Calu3 (cell line): ENCODE measurements at regions of chr3 and their contacts with region 1.

Region 1: GRCh38 chr3:169497567-169498257 is 165.8 kb downstream of the MECOM start:
- DNase-seq: peak; percentile 53
- H3K4me3 Mint-ChIP-seq: peak overlapping the region; percentile 22
- H3K27ac Mint-ChIP-seq: peak overlapping the region; percentile 82
- H3K4me1 Mint-ChIP-seq: peaks cover 65% of the 10 kb centered on the region
- H3K27me3 Mint-ChIP-seq: no peaks in the 10 kb centered on the region
- CTCF ChIP-seq: no peak

Region 2: GRCh38 chr3:168878655-168879054 is 619.1 kb before region 1 on chr3:
- CTCF ChIA-PET with region 1: no interaction called
- intact Hi-C with region 1: loop called (anchors 10 kb)
- DNase-seq: no peak
- H3K4me3 Mint-ChIP-seq: no peak overlapping the region
- H3K27ac Mint-ChIP-seq: no peak overlapping the region
- H3K4me1 Mint-ChIP-seq: peaks cover 71% of the 10 kb centered on the region
- H3K27me3 Mint-ChIP-seq: no peaks in the 10 kb centered on the region
- CTCF ChIP-seq: no peak

Region 3: GRCh38 chr3:169203631-169204550 is 293.8 kb before region 1 on chr3:
- CTCF ChIA-PET with region 1: interaction called, 3 read pairs
- intact Hi-C with region 1: loop called (anchors 10 kb)
- DNase-seq: no peak
- H3K4me3 Mint-ChIP-seq: no peak overlapping the region
- H3K27ac Mint-ChIP-seq: no peak overlapping the region
- H3K4me1 Mint-ChIP-seq: peaks cover 13% of the 10 kb centered on the region
- H3K27me3 Mint-ChIP-seq: no peaks in the 10 kb centered on the region
- CTCF ChIP-seq: no peak

Region 4: GRCh38 chr3:169218314-169218983 is 279.3 kb before region 1 on chr3:
- CTCF ChIA-PET with region 1: no interaction called
- intact Hi-C with region 1: no loop called
- DNase-seq: peak; percentile 80
- H3K4me3 Mint-ChIP-seq: no peak overlapping the region
- H3K27ac Mint-ChIP-seq: no peak overlapping the region
- H3K4me1 Mint-ChIP-seq: peaks cover 13% of the 10 kb centered on the region
- H3K27me3 Mint-ChIP-seq: no peaks in the 10 kb centered on the region
- CTCF ChIP-seq: peak; percentile 88

Region 5: GRCh38 chr3:169295126-169295525 is 202.6 kb before region 1 on chr3:
- CTCF ChIA-PET with region 1: interaction called, 3 read pairs
- intact Hi-C with region 1: loop called (anchors 5 kb)
- DNase-seq: peak; percentile 51
- H3K4me3 Mint-ChIP-seq: no peak overlapping the region
- H3K27ac Mint-ChIP-seq: peak overlapping the region; percentile 84
- H3K4me1 Mint-ChIP-seq: peaks cover 72% of the 10 kb centered on the region
- H3K27me3 Mint-ChIP-seq: no peaks in the 10 kb centered on the region
- CTCF ChIP-seq: peak; percentile 72

Region 6: DNA sequence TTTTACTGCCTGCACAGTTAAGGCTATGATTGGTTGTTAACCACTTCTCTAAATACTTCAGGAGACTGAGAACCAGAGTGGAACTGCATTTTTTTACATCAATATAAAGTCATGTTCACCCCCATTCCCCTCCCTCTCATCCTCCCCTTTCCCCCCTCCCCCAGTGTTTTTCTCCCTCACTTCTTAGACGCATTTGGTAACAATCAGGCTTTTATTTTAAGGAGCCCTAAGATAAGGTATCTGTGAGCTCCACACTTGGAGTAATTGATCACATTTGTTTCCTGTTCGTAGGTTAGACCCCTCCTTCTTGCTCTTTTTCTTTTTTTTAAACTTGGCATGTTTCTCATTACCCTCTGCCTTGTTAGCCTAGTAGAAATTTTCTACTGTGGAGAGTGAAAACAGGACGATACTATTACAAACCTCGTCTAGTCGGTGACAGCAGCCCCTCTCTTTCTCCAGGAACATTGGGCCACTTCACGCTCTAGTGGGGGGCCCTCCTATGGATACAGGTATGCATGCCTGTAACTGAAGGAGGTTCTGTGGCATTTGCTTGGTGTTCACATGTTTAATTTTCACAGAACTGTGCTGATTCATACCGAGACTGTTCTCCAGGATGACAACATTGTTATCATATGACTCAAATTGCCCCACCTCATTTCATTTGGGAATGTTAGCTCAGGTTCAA is 148.6 kb before region 1 on chr3:
- CTCF ChIA-PET with region 1: interaction called, 3 read pairs
- intact Hi-C with region 1: loop called (anchors 5 kb)
- DNase-seq: peak; percentile 60
- H3K4me3 Mint-ChIP-seq: peak overlapping the region; percentile 65
- H3K27ac Mint-ChIP-seq: peak overlapping the region; percentile 96
- H3K4me1 Mint-ChIP-seq: peaks cover 74% of the 10 kb centered on the region
- H3K27me3 Mint-ChIP-seq: no peaks in the 10 kb centered on the region
- CTCF ChIP-seq: no peak

Region 7: GRCh38 chr3:169430707-169431404 is 66.9 kb before region 1 on chr3:
- CTCF ChIA-PET with region 1: interaction called, 3 read pairs
- intact Hi-C with region 1: loop called (anchors 5 kb)
- DNase-seq: peak; percentile 72
- H3K4me3 Mint-ChIP-seq: peak overlapping the region; percentile 2
- H3K27ac Mint-ChIP-seq: peak overlapping the region; percentile 73
- H3K4me1 Mint-ChIP-seq: peaks cover 44% of the 10 kb centered on the region
- H3K27me3 Mint-ChIP-seq: no peaks in the 10 kb centered on the region
- CTCF ChIP-seq: no peak

Region 8: GRCh38 chr3:169515132-169515531 is 17.4 kb after region 1 on chr3:
- CTCF ChIA-PET with region 1: no interaction called
- intact Hi-C with region 1: no loop called
- DNase-seq: no peak
- H3K4me3 Mint-ChIP-seq: no peak overlapping the region
- H3K27ac Mint-ChIP-seq: no peak overlapping the region
- H3K4me1 Mint-ChIP-seq: no peaks in the 10 kb centered on the region
- H3K27me3 Mint-ChIP-seq: no peaks in the 10 kb centered on the region
- CTCF ChIP-seq: no peak

Region 9: DNA sequence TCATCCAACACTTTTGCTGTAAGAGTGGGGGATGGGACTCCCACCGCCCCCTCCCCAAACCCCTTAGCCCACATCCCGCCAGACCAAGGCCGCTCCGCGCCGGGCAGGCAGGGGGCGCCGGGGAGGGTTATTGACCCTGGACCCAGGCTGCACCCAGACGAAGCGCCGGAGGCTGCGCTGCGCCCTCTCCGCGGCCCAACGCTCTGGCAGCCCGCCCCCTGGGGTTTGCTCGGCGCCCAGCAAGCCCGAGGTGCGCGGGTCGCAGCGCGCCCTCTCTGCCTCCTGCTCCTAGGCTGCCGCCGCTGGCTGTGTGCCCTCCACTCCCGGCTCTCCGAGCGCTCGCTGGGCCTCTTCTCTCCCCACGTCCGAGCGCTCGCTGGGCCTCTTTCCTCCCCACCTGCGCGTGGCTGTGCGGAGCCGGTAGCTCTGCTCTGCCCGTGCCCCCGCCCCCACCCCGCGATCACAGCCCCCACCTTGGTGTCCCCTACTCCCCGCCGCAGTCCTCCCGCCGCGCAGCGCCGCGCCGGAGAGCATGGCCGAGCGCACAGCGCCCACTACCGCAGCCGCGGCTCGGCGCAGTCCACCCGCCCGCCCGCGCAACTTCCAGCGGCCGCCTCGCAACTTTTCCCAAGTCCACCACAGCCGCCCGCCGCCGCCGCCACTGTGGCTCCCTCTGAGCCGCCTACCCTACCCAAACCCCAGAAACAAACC is 164.6 kb after region 1 on chr3:
- CTCF ChIA-PET with region 1: interaction called, 3 read pairs
- intact Hi-C with region 1: loop called (anchors 2 kb)
- DNase-seq: peak; percentile 97
- H3K4me3 Mint-ChIP-seq: peak overlapping the region; percentile 79
- H3K27ac Mint-ChIP-seq: peak overlapping the region; percentile 60
- H3K4me1 Mint-ChIP-seq: peaks cover 53% of the 10 kb centered on the region
- H3K27me3 Mint-ChIP-seq: no peaks in the 10 kb centered on the region
- CTCF ChIP-seq: peak; percentile 88

Region 10: DNA sequence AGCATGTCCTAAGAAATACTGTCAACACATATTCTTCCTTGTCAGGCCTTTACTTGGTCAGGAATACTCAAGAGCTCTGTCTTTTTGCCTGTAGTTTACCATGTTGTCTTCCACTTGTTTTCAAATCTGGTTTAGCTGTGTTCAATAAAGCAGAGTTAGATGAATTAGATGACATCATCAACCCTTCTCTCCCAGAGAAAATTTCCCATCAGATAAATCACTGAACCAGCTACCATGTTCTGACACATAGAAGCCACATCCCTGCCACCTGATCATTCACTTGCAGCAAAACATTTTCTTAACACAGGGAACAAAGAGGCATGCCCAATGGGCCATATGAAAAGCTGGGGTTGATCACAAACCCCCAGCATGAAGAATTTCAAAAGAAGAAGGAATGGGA is 225.0 kb after region 1 on chr3:
- CTCF ChIA-PET with region 1: no interaction called
- intact Hi-C with region 1: no loop called
- DNase-seq: no peak
- H3K4me3 Mint-ChIP-seq: no peak overlapping the region
- H3K27ac Mint-ChIP-seq: no peak overlapping the region
- H3K4me1 Mint-ChIP-seq: no peaks in the 10 kb centered on the region
- H3K27me3 Mint-ChIP-seq: peaks cover 20% of the 10 kb centered on the region
- CTCF ChIP-seq: no peak